B cell (primary cell): ENCODE measurements at regions of chr3 and their contacts with region 1.

Region 1: DNA sequence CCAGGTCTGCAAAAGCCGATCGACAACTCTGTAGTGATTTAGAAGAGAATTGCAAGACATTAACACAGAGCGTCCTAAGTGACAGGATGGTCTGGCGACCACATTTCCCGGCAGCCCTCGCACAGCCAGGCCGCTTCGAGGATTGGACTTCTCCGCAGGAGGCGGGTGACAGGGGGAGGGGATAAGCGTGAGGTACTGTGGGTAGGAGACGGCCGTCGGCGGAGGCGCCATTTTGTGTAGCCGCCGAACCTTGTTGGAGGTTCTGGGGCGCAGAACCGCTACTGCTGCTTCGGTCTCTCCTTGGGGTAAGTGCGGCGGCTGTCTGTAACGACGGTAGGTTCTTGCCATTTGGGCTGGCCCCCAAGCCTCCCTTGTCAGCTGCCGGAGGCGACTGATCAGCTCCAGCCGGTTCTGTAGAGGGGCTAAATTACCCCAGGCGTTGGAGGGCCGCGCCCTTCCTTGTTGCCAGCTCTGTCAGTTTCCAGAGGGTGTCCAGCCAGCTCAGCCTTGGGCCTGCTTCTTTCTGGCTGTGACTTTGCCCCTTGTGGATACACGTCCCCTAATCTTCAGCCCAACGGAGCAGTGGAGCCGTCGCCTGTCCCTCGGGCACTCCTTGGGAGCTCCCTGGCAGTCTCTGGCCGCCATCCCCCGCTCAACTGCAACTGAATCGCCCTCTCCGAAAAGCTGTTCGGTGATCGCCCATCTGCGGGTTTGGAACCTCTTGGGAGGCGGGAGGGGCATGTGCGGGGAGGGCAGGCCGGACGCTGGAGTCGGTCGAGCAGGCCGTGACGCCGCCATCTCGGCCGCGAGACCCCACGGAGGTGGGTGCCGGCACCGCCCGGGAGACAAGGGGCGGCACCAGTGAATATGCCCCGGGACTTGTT is at the start of gene RBM5:
- DNase-seq: peak; percentile 91
- ATAC-seq: peak; percentile 100
- H3K4me3 ChIP-seq: peak within 1 kb of the TSS; percentile 92 to 98 (median 96)
- H3K4me3 Mint-ChIP-seq: peak within 1 kb of the TSS; percentile 97
- H3K27ac ChIP-seq: peak within 1 kb of the TSS; percentile 94 to 96
- H3K27ac Mint-ChIP-seq: peak within 1 kb of the TSS; percentile 97
- H3K4me1 ChIP-seq: peaks cover 18 to 23% of the 10 kb centered on the region in 2 donors
- H3K4me1 Mint-ChIP-seq: peaks cover 27% of the 10 kb centered on the region
- H3K27me3 ChIP-seq: no peaks in the 10 kb centered on the region
- H3K27me3 Mint-ChIP-seq: no peaks in the 10 kb centered on the region
- CTCF ChIP-seq: no peak
- total RNA-seq, gene RBM5: 464 and 493 TPM in 2 replicates

Region 2: GRCh38 chr3:49929331-49930240 is 159.4 kb before region 1 on chr3 and contains the start of gene MON1A:
- CTCF ChIA-PET with region 1: no interaction called
- POLR2A ChIA-PET with region 1: no interaction called
- intact Hi-C with region 1: loop called (anchors 1 kb)
- DNase-seq: peak; percentile 86
- ATAC-seq: peak; percentile 93
- H3K4me3 ChIP-seq: peak within 1 kb of the TSS; percentile 63 to 96 (median 92)
- H3K4me3 Mint-ChIP-seq: peak within 1 kb of the TSS; percentile 85
- H3K27ac ChIP-seq: peak within 1 kb of the TSS; percentile 70 to 89
- H3K27ac Mint-ChIP-seq: peak within 1 kb of the TSS; percentile 81
- H3K4me1 ChIP-seq: peaks cover 8 to 17% of the 10 kb centered on the region in 2 donors
- H3K4me1 Mint-ChIP-seq: peaks cover 11% of the 10 kb centered on the region
- H3K27me3 ChIP-seq: no peaks in the 10 kb centered on the region
- H3K27me3 Mint-ChIP-seq: no peaks in the 10 kb centered on the region
- CTCF ChIP-seq: peak; percentile 35
- total RNA-seq, gene MON1A: 5.6 and 6.6 TPM in 2 replicates